H1 (cell line): ENCODE measurements at regions of chr1 and their contacts with region 1.

Region 1: DNA sequence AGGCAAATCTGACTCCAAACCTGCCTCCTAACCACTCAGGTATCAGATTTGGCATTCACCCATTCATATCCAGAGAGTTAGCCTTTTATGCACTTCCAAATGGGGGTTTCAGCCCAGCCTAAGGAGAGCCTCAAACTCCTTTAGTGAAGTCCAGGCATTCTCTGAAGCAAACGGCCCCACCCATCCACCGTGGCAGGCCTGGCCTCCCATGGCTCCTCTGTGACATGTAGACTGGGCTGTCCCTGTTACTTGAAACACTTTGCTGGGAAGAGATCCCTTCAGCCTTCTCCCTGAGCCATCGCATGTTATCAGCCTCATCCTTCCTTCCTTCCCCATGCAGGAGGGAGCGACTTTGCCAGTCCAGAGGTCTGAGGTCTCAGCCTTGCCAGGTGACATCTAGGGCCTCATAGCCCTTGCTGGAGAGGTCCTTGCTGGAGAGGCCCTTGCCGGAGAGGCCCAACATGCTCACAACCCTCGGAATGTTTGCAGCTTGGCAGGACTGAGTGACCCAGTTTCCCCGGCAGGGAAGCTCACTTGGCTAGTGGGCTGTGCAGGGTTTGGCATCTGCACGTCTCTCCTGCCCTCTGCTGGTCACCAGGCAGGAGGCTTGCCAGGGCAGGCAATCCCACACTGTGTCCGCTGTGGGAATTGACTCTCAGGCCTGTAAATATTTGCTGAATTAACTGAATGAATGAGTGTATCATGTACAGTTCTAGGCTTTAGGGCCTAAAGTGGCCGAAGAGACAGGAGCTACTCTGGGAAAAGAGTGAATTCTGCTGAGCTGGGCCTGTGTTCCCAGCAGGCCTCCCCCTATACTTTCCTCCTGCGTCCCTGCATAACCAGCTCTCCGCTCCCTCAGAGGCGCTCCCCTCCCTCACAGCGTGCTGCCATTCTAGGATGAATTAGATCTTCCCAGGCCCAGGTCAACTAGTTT is 26.7 kb upstream of the RBM15 start:
- DNase-seq: peak; percentile 25 to 84
- H3K4me3 ChIP-seq: peak overlapping the region in 3 of 4 experiments; percentile 6 to 46 (median 29); a peak in 5 of 8 replicates
- H3K27ac ChIP-seq: no peak overlapping the region
- H3K4me1 ChIP-seq: peaks cover 0 to 7% (median 4%) of the 10 kb centered on the region in 4 experiments; a peak in 5 of 7 replicates
- H3K27me3 ChIP-seq: no peaks in the 10 kb centered on the region; a peak in 1 of 7 replicates
- CTCF ChIP-seq: peak; percentile 97 to 98 (median 98)
- EP300 ChIP-seq: no peak
- POLR2A ChIP-seq: no peak
- RAD21 ChIP-seq: peak; percentile 97 to 98

Region 2: DNA sequence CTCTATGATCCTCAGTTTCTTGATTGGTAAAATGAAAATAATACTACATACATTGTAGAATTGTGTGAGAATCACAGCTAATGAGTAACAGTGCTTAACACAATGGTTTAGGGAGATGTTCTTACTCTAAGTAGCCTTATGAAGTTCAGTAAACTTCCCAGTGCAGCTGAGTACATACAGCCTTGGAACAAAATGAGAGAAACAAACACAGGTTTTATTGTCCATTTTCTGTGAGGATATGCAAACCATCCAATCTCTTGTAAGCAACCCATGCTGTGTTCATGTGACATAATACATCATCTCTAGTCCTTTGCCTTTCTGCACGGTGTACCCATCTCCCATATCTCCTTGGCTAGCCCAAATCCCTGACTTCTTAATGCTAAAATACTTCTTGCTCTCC is 292.7 kb before region 1 on chr1:
- CTCF ChIA-PET with region 1: no interaction called
- POLR2A ChIA-PET with region 1: no interaction called
- DNase-seq: no peak
- H3K4me3 ChIP-seq: no peak overlapping the region
- H3K27ac ChIP-seq: no peak overlapping the region
- H3K4me1 ChIP-seq: no peaks in the 10 kb centered on the region
- H3K27me3 ChIP-seq: no peaks in the 10 kb centered on the region
- CTCF ChIP-seq: no peak
- EP300 ChIP-seq: no peak
- POLR2A ChIP-seq: no peak
- RAD21 ChIP-seq: no peak

Region 3: GRCh38 chr1:110196917-110197765 is 115.3 kb before region 1 on chr1:
- CTCF ChIA-PET with region 1: interaction called, 1,001 read pairs
- POLR2A ChIA-PET with region 1: no interaction called
- DNase-seq: peak in 1 of 2 experiments; percentile 63
- H3K4me3 ChIP-seq: no peak overlapping the region
- H3K27ac ChIP-seq: no peak overlapping the region
- H3K4me1 ChIP-seq: peaks cover 0 to 6% (median 2%) of the 10 kb centered on the region in 4 experiments; a peak in 2 of 7 replicates
- H3K27me3 ChIP-seq: no peaks in the 10 kb centered on the region
- CTCF ChIP-seq: peak; percentile 73 to 95 (median 81)
- EP300 ChIP-seq: no peak
- POLR2A ChIP-seq: no peak
- RAD21 ChIP-seq: peak; percentile 70 to 82

Region 4: GRCh38 chr1:110229348-110230001 is 83.0 kb before region 1 on chr1:
- CTCF ChIA-PET with region 1: interaction called, 16 read pairs
- POLR2A ChIA-PET with region 1: no interaction called
- DNase-seq: no peak
- H3K4me3 ChIP-seq: no peak overlapping the region
- H3K27ac ChIP-seq: no peak overlapping the region
- H3K4me1 ChIP-seq: peaks cover 0 to 6% (median 3%) of the 10 kb centered on the region in 4 experiments; a peak in 1 of 7 replicates
- H3K27me3 ChIP-seq: no peaks in the 10 kb centered on the region
- CTCF ChIP-seq: peak in 1 of 3 experiments; percentile 2; a peak in 1 of 4 replicates
- EP300 ChIP-seq: no peak
- POLR2A ChIP-seq: no peak
- RAD21 ChIP-seq: peak in 1 of 2 experiments; percentile 20; a peak in 1 of 4 replicates

Region 5: GRCh38 chr1:110243574-110243973 is 68.9 kb before region 1 on chr1:
- CTCF ChIA-PET with region 1: interaction called, 21 read pairs
- POLR2A ChIA-PET with region 1: interaction called, 6 read pairs
- DNase-seq: no peak
- H3K4me3 ChIP-seq: no peak overlapping the region
- H3K27ac ChIP-seq: no peak overlapping the region
- H3K4me1 ChIP-seq: peaks cover 0 to 21% (median 14%) of the 10 kb centered on the region in 4 experiments; a peak in 6 of 7 replicates
- H3K27me3 ChIP-seq: no peaks in the 10 kb centered on the region; a peak in 3 of 7 replicates
- CTCF ChIP-seq: no peak
- EP300 ChIP-seq: no peak
- POLR2A ChIP-seq: no peak
- RAD21 ChIP-seq: no peak

Region 6: GRCh38 chr1:110272045-110272444 is 40.4 kb before region 1 on chr1:
- CTCF ChIA-PET with region 1: interaction called, 11 read pairs
- POLR2A ChIA-PET with region 1: no interaction called
- DNase-seq: no peak
- H3K4me3 ChIP-seq: no peak overlapping the region
- H3K27ac ChIP-seq: no peak overlapping the region
- H3K4me1 ChIP-seq: no peaks in the 10 kb centered on the region
- H3K27me3 ChIP-seq: no peaks in the 10 kb centered on the region
- CTCF ChIP-seq: no peak
- EP300 ChIP-seq: no peak
- POLR2A ChIP-seq: no peak
- RAD21 ChIP-seq: no peak

Region 7: DNA sequence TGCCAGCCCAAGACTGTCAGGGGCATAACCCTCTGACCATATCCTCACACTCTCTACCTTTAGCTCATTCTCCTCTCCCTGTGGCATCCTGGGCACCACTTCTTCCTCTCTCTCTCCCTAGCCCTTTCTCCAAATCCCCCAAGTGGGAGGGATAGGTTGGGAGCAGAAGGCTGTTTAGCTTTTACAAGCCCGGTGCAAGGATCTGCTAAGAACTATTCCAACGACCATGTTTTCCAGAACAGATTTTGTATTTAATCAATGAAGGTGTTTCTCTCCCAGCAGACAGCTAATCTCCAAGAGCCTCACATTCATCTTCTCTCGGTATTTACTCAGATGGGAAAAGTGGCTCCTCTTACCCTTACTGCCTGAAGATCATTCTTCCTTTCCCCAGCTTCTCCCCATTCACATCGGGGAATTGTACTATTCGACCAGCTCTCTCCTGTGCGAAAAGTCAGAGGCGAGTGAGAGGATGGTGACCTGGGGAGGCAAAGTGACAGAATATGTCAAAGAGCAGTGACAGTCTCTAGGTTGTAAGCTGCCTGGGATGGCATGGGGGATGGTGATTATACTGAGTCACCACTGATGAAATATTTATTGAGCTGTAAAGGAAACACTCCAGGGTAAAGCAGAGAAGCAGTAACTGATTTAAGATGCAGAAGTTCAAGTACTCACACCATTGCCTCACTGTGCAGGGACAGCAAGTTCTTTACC is 20.3 kb before region 1 on chr1:
- CTCF ChIA-PET with region 1: interaction called, 34 read pairs
- POLR2A ChIA-PET with region 1: interaction called, 3 read pairs
- DNase-seq: no peak
- H3K4me3 ChIP-seq: no peak overlapping the region
- H3K27ac ChIP-seq: no peak overlapping the region
- H3K4me1 ChIP-seq: no peaks in the 10 kb centered on the region; a peak in 1 of 7 replicates
- H3K27me3 ChIP-seq: no peaks in the 10 kb centered on the region
- CTCF ChIP-seq: no peak
- EP300 ChIP-seq: no peak
- POLR2A ChIP-seq: no peak
- RAD21 ChIP-seq: no peak

Region 8: DNA sequence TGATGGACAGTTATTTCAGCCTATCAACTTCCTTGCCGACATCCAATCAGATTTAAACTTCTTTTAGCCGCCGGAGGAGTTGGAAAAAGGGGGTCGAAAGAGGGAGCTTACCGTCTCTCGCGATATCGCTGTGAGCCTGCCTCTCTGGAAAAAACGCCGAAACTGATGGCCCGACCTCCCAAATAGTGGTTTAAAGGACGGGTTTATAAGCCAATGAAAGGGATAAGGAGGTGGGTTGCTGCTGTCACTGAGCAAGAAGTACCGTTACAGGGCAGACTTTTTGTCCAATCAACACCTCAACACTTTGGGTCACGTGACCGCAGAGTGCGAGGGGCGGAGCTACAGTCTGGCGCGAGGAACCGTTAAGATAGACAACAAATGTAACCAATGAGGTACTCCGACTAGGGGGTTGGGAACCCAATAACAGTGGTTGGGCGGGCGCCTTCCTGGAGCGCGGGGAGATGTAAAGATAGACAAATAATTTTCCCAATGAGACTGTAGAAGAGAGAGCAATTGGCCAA is 26.5 kb after region 1 on chr1 and contains the start of gene RBM15:
- CTCF ChIA-PET with region 1: interaction called, 35 read pairs
- POLR2A ChIA-PET with region 1: interaction called, 14 read pairs
- DNase-seq: peak; percentile 92 to 98
- H3K4me3 ChIP-seq: peak within 1 kb of the TSS; percentile 93 to 97 (median 96)
- H3K27ac ChIP-seq: peak within 1 kb of the TSS; percentile 97
- H3K4me1 ChIP-seq: peaks cover 0 to 18% (median 15%) of the 10 kb centered on the region in 4 experiments; a peak in 6 of 7 replicates
- H3K27me3 ChIP-seq: no peaks in the 10 kb centered on the region
- CTCF ChIP-seq: no peak
- EP300 ChIP-seq: no peak
- POLR2A ChIP-seq: no peak
- RAD21 ChIP-seq: no peak
- total RNA-seq, gene RBM15: 41.2 and 44.9 TPM in 2 replicates